Breast epithelium (tissue), 4 donors: ENCODE measurements at regions of chr22 and their contacts with region 1.

Region 1: GRCh38 chr22:35498026-35498800 is 42.4 kb upstream of the RASD2 start:
- DNase-seq: no peak
- H3K4me3 ChIP-seq: no peak overlapping the region
- H3K27ac ChIP-seq: no peak overlapping the region
- H3K4me1 ChIP-seq: no peaks in the 10 kb centered on the region
- H3K27me3 ChIP-seq: no peaks in the 10 kb centered on the region
- CTCF ChIP-seq: no peak
- POLR2A ChIP-seq: no peak

Region 2: DNA sequence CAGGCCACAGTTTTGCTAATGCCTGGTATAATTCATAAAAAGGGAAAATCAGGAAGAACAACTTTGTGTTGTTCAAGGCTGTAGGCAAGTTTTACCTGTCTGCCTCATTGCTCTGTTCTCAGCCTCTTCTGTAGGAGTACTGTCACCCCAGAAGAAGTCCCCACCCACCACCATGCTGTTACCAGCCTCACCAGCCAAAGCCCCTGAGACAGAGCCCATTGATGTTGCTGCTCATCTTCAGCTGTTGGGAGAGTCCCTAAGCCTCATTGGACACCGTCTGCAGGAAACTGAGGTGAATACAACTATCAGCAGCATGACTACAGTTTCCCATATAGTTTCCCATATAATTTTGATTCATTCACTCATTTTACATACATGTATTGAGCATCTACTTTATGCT is 210.1 kb before region 1 on chr22:
- intact Hi-C with region 1: loop called (anchors 10 kb)
- DNase-seq: no peak
- H3K4me3 ChIP-seq: no peak overlapping the region
- H3K27ac ChIP-seq: no peak overlapping the region
- H3K4me1 ChIP-seq: no peaks in the 10 kb centered on the region
- H3K27me3 ChIP-seq: no peaks in the 10 kb centered on the region
- CTCF ChIP-seq: no peak
- POLR2A ChIP-seq: no peak

Region 3: DNA sequence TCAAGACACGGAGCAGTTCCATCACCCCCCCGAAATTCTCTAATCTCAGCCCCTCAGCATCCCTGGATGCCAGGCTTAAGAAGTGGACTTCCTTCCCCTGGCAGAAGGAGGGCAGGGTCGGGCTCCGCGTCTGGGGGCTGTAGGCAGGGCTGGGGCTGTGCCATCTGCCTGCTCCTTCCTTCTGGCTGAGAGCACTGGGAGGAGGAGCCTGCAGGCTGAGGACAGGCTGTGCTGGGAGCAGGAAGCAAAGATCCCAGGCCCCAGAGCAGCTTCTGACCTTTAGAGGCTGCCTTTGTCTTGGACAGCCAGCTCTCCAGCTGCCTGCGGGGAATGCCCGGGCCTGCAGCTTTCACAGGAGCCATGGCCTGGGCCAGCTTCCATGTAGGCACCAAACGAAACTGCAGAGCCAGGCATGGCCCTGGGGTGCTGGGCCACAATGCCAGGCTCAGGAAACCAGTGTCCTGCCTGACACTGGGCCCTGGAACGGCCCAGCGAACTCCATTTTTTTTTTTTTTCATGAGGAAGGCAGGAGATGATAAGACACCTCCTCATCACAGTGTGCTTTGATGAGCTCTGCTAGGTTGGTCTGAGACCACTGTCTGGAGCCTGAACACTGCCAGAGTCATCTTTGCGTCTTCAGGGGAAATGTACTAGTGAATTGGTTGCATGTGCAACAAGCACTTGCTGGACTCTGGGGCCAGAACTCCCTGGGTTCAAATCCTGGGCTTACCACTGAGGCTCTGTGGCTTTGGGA is 30.4 kb before region 1 on chr22:
- intact Hi-C with region 1: no loop called
- DNase-seq: peak; percentile 61 to 75
- H3K4me3 ChIP-seq: peak overlapping the region in 1 of 3 donors; percentile 3
- H3K27ac ChIP-seq: peak overlapping the region; percentile 74 to 79
- H3K4me1 ChIP-seq: peaks cover 7 to 10% of the 10 kb centered on the region in 2 donors
- H3K27me3 ChIP-seq: no peaks in the 10 kb centered on the region
- CTCF ChIP-seq: no peak
- POLR2A ChIP-seq: no peak

Region 4: DNA sequence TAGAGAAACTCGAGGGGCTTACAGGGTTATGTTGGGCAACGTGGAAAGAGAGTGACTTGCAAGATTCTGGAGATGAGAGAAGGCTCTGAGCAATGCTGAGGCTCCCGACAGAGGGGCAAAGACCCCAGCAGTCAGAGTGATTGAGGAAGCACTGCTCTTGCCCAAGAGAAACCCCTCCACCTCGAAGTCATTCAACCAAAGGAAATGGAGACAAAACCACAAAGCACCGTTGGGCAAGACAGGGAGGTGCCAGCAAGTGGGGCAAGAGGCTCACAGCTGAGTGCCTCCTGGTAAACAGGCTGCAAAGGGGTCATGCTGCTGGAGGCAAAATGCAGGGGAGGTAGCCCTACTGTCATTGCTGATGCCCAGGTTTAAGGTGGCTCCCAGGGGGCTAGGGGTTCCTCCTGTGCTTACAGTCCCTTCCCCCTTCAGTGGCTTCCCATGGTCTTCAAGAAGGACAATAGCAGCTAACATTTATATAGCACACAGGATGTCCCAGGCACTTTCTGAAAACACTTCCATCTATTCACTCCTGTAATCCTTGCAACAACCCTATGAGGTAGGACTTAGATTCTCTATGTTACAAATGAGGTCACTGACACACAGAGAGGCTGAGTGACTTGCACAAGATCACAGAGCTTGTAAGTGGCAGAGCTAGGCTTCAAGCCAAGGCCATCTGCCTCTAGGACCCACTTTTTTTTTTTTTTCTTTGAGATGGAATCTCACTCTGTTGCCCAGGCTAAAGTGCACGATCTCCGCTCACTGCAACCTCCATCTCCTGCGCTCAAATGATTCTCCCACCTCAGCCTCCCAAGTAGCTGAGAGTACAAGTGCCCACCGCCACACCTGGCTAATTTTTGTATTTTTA is 907.7 kb after region 1 on chr22:
- intact Hi-C with region 1: no loop called
- DNase-seq: no peak
- H3K4me3 ChIP-seq: no peak overlapping the region
- H3K27ac ChIP-seq: peak overlapping the region in 1 of 2 donors; percentile 43
- H3K4me1 ChIP-seq: no peaks in the 10 kb centered on the region
- H3K27me3 ChIP-seq: no peaks in the 10 kb centered on the region
- CTCF ChIP-seq: no peak
- POLR2A ChIP-seq: no peak